ENCODE measurements at regions of chr22 and their contacts with region 1.

Region 1: GRCh38 chr22:23893943-23894709 is at the start of gene MIF:
- DNase-seq: peak; percentile 97
- H3K4me3 Mint-ChIP-seq: peak within 1 kb of the TSS; percentile 96
- H3K27ac Mint-ChIP-seq: peak within 1 kb of the TSS; percentile 96
- H3K4me1 Mint-ChIP-seq: peaks cover 40% of the 10 kb centered on the region
- H3K27me3 Mint-ChIP-seq: no peaks in the 10 kb centered on the region

Region 2: DNA sequence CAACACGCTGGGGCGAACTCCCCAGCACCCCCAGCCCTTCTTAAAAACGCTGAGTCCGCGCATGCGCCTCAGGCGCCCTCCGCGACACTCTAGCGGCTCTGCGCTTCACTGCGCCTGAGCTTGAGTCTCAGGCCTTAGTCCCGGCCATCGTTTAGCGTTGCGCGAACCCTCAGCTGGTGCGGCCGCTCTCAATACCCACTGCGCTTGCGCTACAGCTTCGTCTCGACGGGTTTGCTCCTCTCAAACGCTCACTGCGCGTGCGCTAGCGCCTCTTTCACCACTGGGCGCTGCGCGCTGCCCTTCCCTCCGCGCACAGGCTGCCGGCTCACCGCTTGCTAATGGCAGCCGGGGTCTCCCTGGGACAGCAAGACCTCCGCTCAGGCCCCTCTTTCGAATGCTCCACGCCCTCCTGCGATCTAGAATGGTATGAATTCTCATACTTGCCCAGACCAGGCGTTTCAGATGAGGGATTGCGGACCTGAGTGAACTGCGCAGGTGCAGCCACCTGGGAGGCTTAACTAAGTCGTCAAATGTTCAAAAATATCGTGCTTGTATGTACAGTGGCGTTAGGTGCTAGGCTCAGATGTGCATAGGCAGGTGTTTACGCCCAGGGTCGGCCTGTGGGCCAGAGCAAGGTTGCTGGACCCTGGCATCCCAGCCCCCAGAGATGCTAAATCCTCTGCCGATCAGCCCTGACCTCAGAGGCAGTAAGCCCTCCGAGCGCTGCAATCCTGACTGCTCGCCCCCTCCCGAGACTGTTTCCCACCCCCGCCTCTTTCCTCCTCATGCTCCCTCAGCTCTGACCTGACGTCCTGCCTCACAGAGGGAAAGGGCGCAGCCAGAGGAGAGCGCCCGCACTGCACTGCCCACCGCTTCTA is 36.3 kb before region 1 on chr22 and contains the start of gene SLC2A11:
- CTCF ChIA-PET with region 1: interaction called, 28 read pairs
- DNase-seq: peak; percentile 97
- H3K4me3 Mint-ChIP-seq: peak within 1 kb of the TSS; percentile 88
- H3K27ac Mint-ChIP-seq: peak within 1 kb of the TSS; percentile 90
- H3K4me1 Mint-ChIP-seq: peaks cover 31% of the 10 kb centered on the region
- H3K27me3 Mint-ChIP-seq: peaks cover 22% of the 10 kb centered on the region

Region 3: DNA sequence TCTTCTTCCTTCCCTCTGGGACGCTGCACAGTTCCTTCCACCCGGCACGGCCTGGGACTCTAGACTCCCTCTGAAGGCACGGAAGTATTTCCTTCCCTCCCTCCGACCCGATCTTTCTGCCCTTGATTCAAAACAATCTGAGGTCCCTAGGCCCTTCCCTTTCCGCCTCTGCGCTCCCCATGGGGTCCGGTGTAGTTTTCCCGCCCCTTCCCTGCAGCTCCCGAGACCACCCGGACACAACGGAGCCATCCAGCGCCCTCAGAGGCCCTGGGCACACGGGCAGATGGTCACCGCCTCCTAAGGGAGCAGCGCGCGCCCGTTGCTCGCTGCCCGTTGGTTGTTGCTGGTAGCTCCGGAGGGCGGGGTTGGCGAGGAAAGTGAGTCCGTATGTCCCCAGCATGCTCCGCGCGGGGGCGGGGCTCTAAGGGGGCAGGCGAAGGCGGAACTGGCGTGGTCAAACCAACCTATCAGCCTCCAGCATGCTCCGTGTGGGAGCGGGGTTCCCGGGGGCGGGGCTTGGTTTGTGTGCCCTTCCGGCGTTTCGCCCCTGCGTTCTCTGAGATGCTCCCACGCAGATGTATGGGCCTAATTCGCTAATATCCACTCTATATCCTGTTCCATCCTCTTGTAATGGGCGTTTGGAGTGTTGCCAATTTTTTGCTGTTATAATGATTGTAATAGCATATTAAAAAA is 19.7 kb after region 1 on chr22:
- CTCF ChIA-PET with region 1: interaction called, 11 read pairs
- DNase-seq: peak; percentile 100
- H3K4me3 Mint-ChIP-seq: peak overlapping the region; percentile 83
- H3K27ac Mint-ChIP-seq: peak overlapping the region; percentile 93
- H3K4me1 Mint-ChIP-seq: peaks cover 28% of the 10 kb centered on the region
- H3K27me3 Mint-ChIP-seq: no peaks in the 10 kb centered on the region

Region 4: DNA sequence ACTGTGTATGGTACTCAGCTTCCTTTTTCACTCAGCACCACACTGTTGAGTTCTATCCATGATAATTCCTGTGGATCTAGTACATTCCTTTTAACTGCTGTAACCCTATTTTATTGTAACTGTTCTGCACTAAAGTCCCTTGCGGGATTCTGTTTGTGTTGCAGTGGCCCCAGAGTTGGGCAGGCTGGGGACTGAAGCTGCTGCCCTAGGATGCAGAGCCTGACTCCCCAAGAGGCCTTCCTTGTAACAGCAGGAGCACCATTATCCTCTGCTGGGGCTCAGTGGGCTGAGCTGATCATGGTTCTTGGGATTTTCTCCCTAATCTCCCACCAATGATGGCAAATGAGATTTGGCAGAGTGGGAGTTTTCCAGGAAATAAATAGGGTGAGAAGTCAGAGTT is 194.7 kb after region 1 on chr22:
- CTCF ChIA-PET with region 1: no interaction called
- DNase-seq: no peak
- H3K4me3 Mint-ChIP-seq: no peak overlapping the region
- H3K27ac Mint-ChIP-seq: no peak overlapping the region
- H3K4me1 Mint-ChIP-seq: peaks cover 4% of the 10 kb centered on the region
- H3K27me3 Mint-ChIP-seq: no peaks in the 10 kb centered on the region